ENCODE measurements at regions of chr4 and their contacts with region 1.

Region 1: GRCh38 chr4:124262211-124263179 is 450.0 kb downstream of the ANKRD50 start:
- DNase-seq: peak in 3 of 5 donors; percentile 15 to 20 (median 15)
- H3K4me3 ChIP-seq: no peak overlapping the region
- H3K4me3 Mint-ChIP-seq: no peak overlapping the region
- H3K27ac ChIP-seq: no peak overlapping the region
- H3K27ac Mint-ChIP-seq: no peak overlapping the region
- H3K4me1 ChIP-seq: no peaks in the 10 kb centered on the region
- H3K4me1 Mint-ChIP-seq: no peaks in the 10 kb centered on the region
- H3K27me3 ChIP-seq: no peaks in the 10 kb centered on the region
- H3K27me3 Mint-ChIP-seq: no peaks in the 10 kb centered on the region

Region 2: GRCh38 chr4:122758033-122758432 is 1504.5 kb before region 1 on chr4:
- CTCF ChIA-PET with region 1: no interaction called
- POLR2A ChIA-PET with region 1: no interaction called
- intact Hi-C with region 1: loop called (anchors 5 kb)
- DNase-seq: peak in 4 of 5 donors; percentile 26 to 39 (median 31)
- H3K4me3 ChIP-seq: no peak overlapping the region
- H3K4me3 Mint-ChIP-seq: no peak overlapping the region
- H3K27ac ChIP-seq: no peak overlapping the region
- H3K27ac Mint-ChIP-seq: no peak overlapping the region
- H3K4me1 ChIP-seq: peaks cover 14% of the 10 kb centered on the region
- H3K4me1 Mint-ChIP-seq: peaks cover 10 to 15% (median 10%) of the 10 kb centered on the region in 4 donors
- H3K27me3 ChIP-seq: no peaks in the 10 kb centered on the region
- H3K27me3 Mint-ChIP-seq: peaks cover 7 to 8% of the 10 kb centered on the region in 2 donors

Region 3: GRCh38 chr4:123102897-123103471 is 1159.5 kb before region 1 on chr4:
- CTCF ChIA-PET with region 1: no interaction called
- POLR2A ChIA-PET with region 1: no interaction called
- intact Hi-C with region 1: loop called (anchors 2 kb)
- DNase-seq: peak in 4 of 5 donors; percentile 6 to 18 (median 11)
- H3K4me3 ChIP-seq: no peak overlapping the region
- H3K4me3 Mint-ChIP-seq: no peak overlapping the region
- H3K27ac ChIP-seq: no peak overlapping the region
- H3K27ac Mint-ChIP-seq: no peak overlapping the region
- H3K4me1 ChIP-seq: no peaks in the 10 kb centered on the region
- H3K4me1 Mint-ChIP-seq: peaks cover 0 to 3% (median 0%) of the 10 kb centered on the region in 4 donors
- H3K27me3 ChIP-seq: no peaks in the 10 kb centered on the region
- H3K27me3 Mint-ChIP-seq: no peaks in the 10 kb centered on the region

Region 4: GRCh38 chr4:123390846-123391456 is 871.5 kb before region 1 on chr4:
- CTCF ChIA-PET with region 1: no interaction called
- POLR2A ChIA-PET with region 1: no interaction called
- intact Hi-C with region 1: loop called (anchors 2 kb)
- DNase-seq: peak in 4 of 5 donors; percentile 12 to 29 (median 16)
- H3K4me3 ChIP-seq: no peak overlapping the region
- H3K4me3 Mint-ChIP-seq: no peak overlapping the region
- H3K27ac ChIP-seq: no peak overlapping the region
- H3K27ac Mint-ChIP-seq: no peak overlapping the region
- H3K4me1 ChIP-seq: no peaks in the 10 kb centered on the region
- H3K4me1 Mint-ChIP-seq: no peaks in the 10 kb centered on the region
- H3K27me3 ChIP-seq: no peaks in the 10 kb centered on the region
- H3K27me3 Mint-ChIP-seq: peaks cover 4 to 6% of the 10 kb centered on the region in 2 donors

Region 5: DNA sequence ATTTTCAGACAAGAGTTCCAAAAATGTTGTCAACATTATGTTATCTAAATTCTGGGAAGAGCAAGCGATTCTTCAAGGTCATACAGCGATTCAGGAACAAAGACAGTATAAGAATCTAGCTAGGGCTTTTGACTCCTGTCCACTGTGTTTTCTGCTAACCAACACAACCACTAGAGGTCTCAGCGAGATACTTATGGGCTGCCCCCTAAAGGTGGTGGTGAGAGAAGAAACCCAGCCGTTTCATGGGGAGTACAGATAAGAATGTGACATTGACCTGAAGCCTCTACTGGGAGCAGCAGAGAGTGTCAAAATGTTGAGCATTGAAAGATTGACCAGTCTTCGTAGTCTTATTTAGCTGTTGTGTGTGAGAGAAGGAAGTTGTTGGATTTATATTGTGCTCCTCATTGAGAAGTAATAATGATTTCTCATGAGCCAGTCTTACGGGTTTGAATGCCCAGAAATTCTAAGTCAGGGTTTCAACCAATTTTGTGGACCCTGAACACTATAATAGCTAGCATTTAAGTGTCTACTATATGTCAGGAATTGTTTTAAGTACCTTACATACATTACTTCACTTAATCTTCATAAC is 697.6 kb before region 1 on chr4:
- CTCF ChIA-PET with region 1: no interaction called
- POLR2A ChIA-PET with region 1: no interaction called
- intact Hi-C with region 1: loop called (anchors 5 kb)
- DNase-seq: peak in 4 of 5 donors; percentile 42 to 50 (median 45)
- H3K4me3 ChIP-seq: no peak overlapping the region
- H3K4me3 Mint-ChIP-seq: no peak overlapping the region
- H3K27ac ChIP-seq: no peak overlapping the region
- H3K27ac Mint-ChIP-seq: no peak overlapping the region
- H3K4me1 ChIP-seq: no peaks in the 10 kb centered on the region
- H3K4me1 Mint-ChIP-seq: peaks cover 0 to 4% (median 1%) of the 10 kb centered on the region in 4 donors
- H3K27me3 ChIP-seq: no peaks in the 10 kb centered on the region
- H3K27me3 Mint-ChIP-seq: peaks cover 0 to 4% of the 10 kb centered on the region in 2 donors

Region 6: GRCh38 chr4:124183926-124184325 is 78.6 kb before region 1 on chr4:
- CTCF ChIA-PET with region 1: no interaction called
- POLR2A ChIA-PET with region 1: no interaction called
- intact Hi-C with region 1: no loop called
- DNase-seq: no peak
- H3K4me3 ChIP-seq: no peak overlapping the region
- H3K4me3 Mint-ChIP-seq: no peak overlapping the region
- H3K27ac ChIP-seq: no peak overlapping the region
- H3K27ac Mint-ChIP-seq: no peak overlapping the region
- H3K4me1 ChIP-seq: no peaks in the 10 kb centered on the region
- H3K4me1 Mint-ChIP-seq: no peaks in the 10 kb centered on the region
- H3K27me3 ChIP-seq: no peaks in the 10 kb centered on the region
- H3K27me3 Mint-ChIP-seq: no peaks in the 10 kb centered on the region

Region 7: DNA sequence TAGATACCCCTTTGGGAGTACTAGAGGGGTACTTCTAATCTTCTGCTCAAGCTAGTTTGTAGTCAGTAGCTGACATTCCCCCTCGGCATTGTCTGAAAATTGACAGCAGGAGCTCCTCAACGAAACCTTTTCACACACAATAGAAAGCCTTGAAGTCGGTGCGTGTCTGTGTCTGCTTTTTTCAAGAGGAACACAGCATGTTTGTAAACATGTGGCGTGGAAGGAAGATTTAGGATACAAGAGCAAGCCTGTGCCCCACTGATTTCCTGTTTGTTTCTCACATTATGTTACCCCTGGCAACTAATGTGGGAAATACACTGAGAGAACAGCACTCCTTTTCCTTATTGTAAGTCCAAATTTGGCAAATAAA is 197.4 kb after region 1 on chr4:
- CTCF ChIA-PET with region 1: no interaction called
- POLR2A ChIA-PET with region 1: no interaction called
- intact Hi-C with region 1: no loop called
- DNase-seq: no peak
- H3K4me3 ChIP-seq: no peak overlapping the region
- H3K4me3 Mint-ChIP-seq: no peak overlapping the region
- H3K27ac ChIP-seq: no peak overlapping the region
- H3K27ac Mint-ChIP-seq: no peak overlapping the region
- H3K4me1 ChIP-seq: no peaks in the 10 kb centered on the region
- H3K4me1 Mint-ChIP-seq: no peaks in the 10 kb centered on the region
- H3K27me3 ChIP-seq: no peaks in the 10 kb centered on the region
- H3K27me3 Mint-ChIP-seq: no peaks in the 10 kb centered on the region